Posterior cingulate gyrus (tissue), 11 donors: ENCODE measurements at regions of chr1 and their contacts with region 1.

Region 1: GRCh38 chr1:169928438-169929209 is 34.9 kb upstream of the SCYL3 start:
- DNase-seq: no peak

Region 2: DNA sequence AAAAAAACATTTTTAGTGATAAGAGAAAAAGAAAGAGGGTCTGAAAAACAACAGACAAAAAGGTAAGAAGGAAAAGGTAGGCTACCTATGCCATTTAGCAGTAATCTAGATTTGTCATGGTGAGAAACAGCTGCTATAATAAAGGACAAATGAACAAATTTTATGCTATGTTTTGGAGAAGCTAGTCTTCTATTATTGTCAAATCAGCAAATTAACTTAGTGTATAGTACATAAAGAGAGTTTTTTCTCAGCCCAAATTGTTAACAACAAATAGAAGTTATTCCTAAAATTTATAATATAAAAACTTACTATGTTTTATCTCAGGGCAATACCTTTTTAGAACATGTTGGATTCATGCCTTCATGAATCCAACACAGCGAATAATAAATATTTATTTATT is 57.1 kb after region 1 on chr1:
- intact Hi-C with region 1: no loop called
- DNase-seq: no peak

Region 3: DNA sequence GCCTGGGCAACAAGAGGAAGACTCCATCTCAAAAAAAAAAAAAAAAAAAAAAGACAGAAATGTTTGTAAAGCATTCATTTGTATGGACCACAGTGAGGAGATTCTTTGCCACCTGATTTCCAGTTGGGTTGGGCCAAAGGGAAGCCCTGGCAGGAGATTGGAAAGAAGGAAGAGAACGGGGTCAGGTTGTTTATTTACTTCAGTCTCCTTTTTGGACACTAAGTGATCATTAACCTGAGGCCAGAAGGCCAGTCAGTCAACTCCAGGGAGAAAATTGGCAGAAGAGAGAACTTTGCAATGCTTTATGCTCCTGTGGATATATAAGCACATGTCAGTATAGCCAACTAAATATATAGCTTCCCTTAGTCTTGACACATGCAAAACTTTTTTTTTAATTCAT is 303.0 kb after region 1 on chr1:
- intact Hi-C with region 1: no loop called
- DNase-seq: no peak

Region 4: GRCh38 chr1:170929835-170930554 is 1001.4 kb after region 1 on chr1:
- intact Hi-C with region 1: loop called (anchors 10 kb)
- DNase-seq: peak in 5 of 10 donors; percentile 7 to 70 (median 11)